Posterior vena cava (tissue), 2 donors: ENCODE measurements at regions of chr10 and their contacts with region 1.

Region 1: DNA sequence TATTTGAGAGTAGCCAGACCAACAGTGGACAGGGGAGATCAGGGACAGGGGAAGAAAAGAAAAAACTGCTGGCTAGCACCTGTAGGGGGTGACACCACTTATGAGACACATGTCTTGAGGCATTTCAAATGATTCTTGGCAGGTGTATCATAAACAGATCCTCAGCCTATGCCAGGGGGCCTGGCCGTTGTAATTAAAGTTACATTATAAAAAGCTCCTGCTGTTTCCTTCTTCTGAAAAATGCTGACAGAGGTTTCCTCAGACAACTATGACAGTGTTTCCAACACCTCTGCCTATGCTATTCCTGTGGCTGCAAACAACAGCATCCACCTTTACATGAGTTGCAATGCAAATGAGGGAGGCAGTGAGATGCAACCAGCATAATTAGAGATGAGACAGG is 281.0 kb upstream of the PTER start:
- DNase-seq: no peak

Region 2: DNA sequence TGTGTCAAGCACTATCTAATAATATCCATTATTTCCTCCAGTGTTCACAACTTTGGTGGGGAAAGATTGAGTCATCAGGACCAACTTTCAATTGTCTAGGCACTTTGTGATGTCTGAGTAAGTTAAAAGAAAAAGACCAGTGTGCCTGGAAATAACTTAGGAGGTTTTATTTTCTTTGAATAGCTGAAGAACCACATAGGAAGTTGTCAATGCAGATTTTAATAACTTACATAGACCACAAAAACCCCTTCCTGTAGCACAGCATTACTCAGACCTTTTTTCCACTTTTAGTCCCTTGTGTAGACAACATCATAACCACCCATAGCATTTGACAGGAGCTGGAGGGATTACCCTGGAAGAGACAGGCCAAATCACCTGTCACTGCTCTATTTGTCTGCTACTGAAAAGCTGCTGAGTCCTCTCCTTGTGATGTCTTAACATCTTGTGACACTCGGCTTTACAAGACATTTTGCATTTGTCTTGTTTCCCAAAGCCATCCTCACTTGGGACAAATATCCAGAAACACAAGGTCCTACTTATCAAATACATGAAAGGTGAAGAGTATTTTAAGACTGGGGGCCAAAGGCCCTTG is 39.4 kb after region 1 on chr10:
- intact Hi-C with region 1: loop called in 1 of 2 experiments (anchors 1 kb)
- DNase-seq: no peak